Stomach (tissue), 19 donors: ENCODE measurements at regions of chr6 and their contacts with region 1.

Region 1: GRCh38 chr6:145749632-145750031 is 14.3 kb upstream of the EPM2A start:
- DNase-seq: no peak
- H3K4me3 ChIP-seq: no peak overlapping the region
- H3K27ac ChIP-seq: no peak overlapping the region
- H3K4me1 ChIP-seq: peaks cover 0 to 7% (median 0%) of the 10 kb centered on the region in 4 donors
- H3K27me3 ChIP-seq: no peaks in the 10 kb centered on the region
- CTCF ChIP-seq: no peak
- EP300 ChIP-seq: no peak
- POLR2A ChIP-seq: no peak

Region 2: GRCh38 chr6:145602726-145603326 is 146.8 kb before region 1 on chr6:
- intact Hi-C with region 1: no loop called
- DNase-seq: no peak
- H3K4me3 ChIP-seq: no peak overlapping the region
- H3K27ac ChIP-seq: no peak overlapping the region
- H3K4me1 ChIP-seq: no peaks in the 10 kb centered on the region
- H3K27me3 ChIP-seq: no peaks in the 10 kb centered on the region
- CTCF ChIP-seq: no peak
- EP300 ChIP-seq: no peak
- POLR2A ChIP-seq: no peak

Region 3: DNA sequence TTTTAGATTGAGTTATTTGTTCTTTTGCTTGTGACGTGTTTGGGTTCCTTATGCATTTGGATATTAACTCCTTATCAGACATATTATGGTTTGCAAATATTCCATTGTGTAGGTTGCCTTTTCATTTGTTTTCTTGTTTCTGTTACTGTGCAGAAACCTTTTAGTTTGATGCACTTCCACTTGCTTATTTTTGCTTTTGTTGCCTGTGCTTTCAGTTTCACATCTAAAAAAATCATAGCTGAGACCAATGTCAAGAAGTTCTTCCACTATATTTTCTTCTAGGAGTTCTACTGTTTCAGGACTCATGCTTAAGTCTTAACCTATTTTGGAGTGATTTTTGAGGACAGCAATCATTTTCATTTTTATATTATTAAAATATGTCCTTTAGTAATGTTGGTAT is 127.9 kb before region 1 on chr6:
- intact Hi-C with region 1: no loop called
- DNase-seq: no peak
- H3K4me3 ChIP-seq: no peak overlapping the region
- H3K27ac ChIP-seq: no peak overlapping the region
- H3K4me1 ChIP-seq: no peaks in the 10 kb centered on the region
- H3K27me3 ChIP-seq: no peaks in the 10 kb centered on the region
- CTCF ChIP-seq: no peak
- EP300 ChIP-seq: no peak
- POLR2A ChIP-seq: no peak

Region 4: GRCh38 chr6:145809211-145809610 is 59.6 kb after region 1 on chr6:
- intact Hi-C with region 1: loop called (anchors 10 kb)
- DNase-seq: no peak
- H3K4me3 ChIP-seq: no peak overlapping the region
- H3K27ac ChIP-seq: peak overlapping the region in 1 of 5 donors; percentile 46
- H3K4me1 ChIP-seq: peaks cover 0 to 60% (median 34%) of the 10 kb centered on the region in 4 donors
- H3K27me3 ChIP-seq: no peaks in the 10 kb centered on the region
- CTCF ChIP-seq: no peak
- EP300 ChIP-seq: no peak
- POLR2A ChIP-seq: no peak